ENCODE measurements at regions of chr9 and their contacts with region 1.

Region 1: GRCh38 chr9:128643519-128644300 is 12.9 kb downstream of the DYNC2I2 start:
- DNase-seq: no peak
- H3K4me3 ChIP-seq: no peak overlapping the region
- H3K27ac ChIP-seq: no peak overlapping the region
- H3K4me1 ChIP-seq: no peaks in the 10 kb centered on the region
- H3K27me3 ChIP-seq: no peaks in the 10 kb centered on the region
- CTCF ChIP-seq: no peak
- EP300 ChIP-seq: no peak
- POLR2A ChIP-seq: no peak
- RAD21 ChIP-seq: no peak

Region 2: GRCh38 chr9:128696923-128697707 is 53.4 kb after region 1 on chr9:
- CTCF ChIA-PET with region 1: interaction called, 6 read pairs
- POLR2A ChIA-PET with region 1: interaction called, 313 read pairs
- DNase-seq: no peak
- H3K4me3 ChIP-seq: no peak overlapping the region
- H3K27ac ChIP-seq: no peak overlapping the region
- H3K4me1 ChIP-seq: no peaks in the 10 kb centered on the region
- H3K27me3 ChIP-seq: peaks cover 0 to 1% (median 0%) of the 10 kb centered on the region in 4 experiments; a peak in 1 of 7 replicates
- CTCF ChIP-seq: no peak
- EP300 ChIP-seq: no peak
- POLR2A ChIP-seq: peak; percentile 54 to 68
- RAD21 ChIP-seq: no peak

Measured in H1 (cell line).